Endothelial cell of umbilical vein (primary cell): ENCODE measurements at regions of chr13 and their contacts with region 1.

Region 1: GRCh38 chr13:30429721-30430694 is 7.7 kb downstream of the UBE2L5 start:
- DNase-seq: peak; percentile 81
- H3K4me3 ChIP-seq: no peak overlapping the region
- H3K27ac ChIP-seq: peak overlapping the region; percentile 42
- H3K4me1 ChIP-seq: peaks cover 13% of the 10 kb centered on the region
- H3K27me3 ChIP-seq: no peaks in the 10 kb centered on the region
- CTCF ChIP-seq: no peak
- POLR2A ChIP-seq: no peak

Region 2: GRCh38 chr13:30196025-30196424 is 234.0 kb before region 1 on chr13:
- CTCF ChIA-PET with region 1: no interaction called
- POLR2A ChIA-PET with region 1: no interaction called
- dilution Hi-C with region 1: no loop called
- intact Hi-C with region 1: no loop called
- DNase-seq: peak; percentile 4
- H3K4me3 ChIP-seq: no peak overlapping the region
- H3K27ac ChIP-seq: no peak overlapping the region
- H3K4me1 ChIP-seq: no peaks in the 10 kb centered on the region
- H3K27me3 ChIP-seq: no peaks in the 10 kb centered on the region
- CTCF ChIP-seq: no peak
- POLR2A ChIP-seq: no peak

Region 3: DNA sequence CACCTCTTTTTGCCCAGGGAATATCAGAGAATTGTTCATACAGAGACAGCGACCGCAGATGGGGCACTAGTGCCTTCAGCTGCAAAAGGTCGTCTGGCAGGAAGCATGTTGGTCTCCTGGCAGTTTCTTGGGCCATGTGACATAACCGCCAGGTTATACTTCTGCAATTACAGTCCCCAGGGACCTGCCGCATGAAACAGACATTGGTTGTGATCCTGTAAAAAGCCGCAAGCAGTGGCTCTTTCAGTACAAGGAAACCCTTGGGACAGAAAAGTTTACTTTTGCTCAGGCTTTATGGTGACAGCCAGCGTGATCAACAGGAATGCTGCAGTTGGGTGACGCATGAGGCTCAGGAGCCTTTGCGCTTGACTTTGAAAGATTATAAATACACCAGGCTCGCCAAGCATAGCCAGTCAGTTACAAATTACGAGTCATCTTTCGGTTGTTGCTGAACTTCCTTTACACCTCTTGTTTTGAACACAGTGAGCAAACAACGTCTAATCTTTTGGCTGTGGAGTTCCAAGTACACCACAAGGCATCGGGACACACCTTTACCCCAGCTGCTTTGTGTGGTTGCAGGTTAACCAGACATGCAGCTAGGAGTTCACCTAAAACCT is 58.3 kb before region 1 on chr13:
- CTCF ChIA-PET with region 1: no interaction called
- POLR2A ChIA-PET with region 1: no interaction called
- dilution Hi-C with region 1: no loop called
- intact Hi-C with region 1: no loop called
- DNase-seq: peak; percentile 36
- H3K4me3 ChIP-seq: no peak overlapping the region
- H3K27ac ChIP-seq: no peak overlapping the region
- H3K4me1 ChIP-seq: peaks cover 3% of the 10 kb centered on the region
- H3K27me3 ChIP-seq: peaks cover 0 to 2% of the 10 kb centered on the region in 2 experiments
- CTCF ChIP-seq: no peak
- POLR2A ChIP-seq: no peak

Region 4: GRCh38 chr13:30443957-30444404 is 14.0 kb after region 1 on chr13:
- CTCF ChIA-PET with region 1: interaction called, 5 read pairs
- POLR2A ChIA-PET with region 1: interaction called, 4 read pairs
- dilution Hi-C with region 1: no loop called
- intact Hi-C with region 1: loop called (anchors 2 kb)
- DNase-seq: no peak
- H3K4me3 ChIP-seq: no peak overlapping the region
- H3K27ac ChIP-seq: no peak overlapping the region
- H3K4me1 ChIP-seq: peaks cover 9% of the 10 kb centered on the region
- H3K27me3 ChIP-seq: no peaks in the 10 kb centered on the region
- CTCF ChIP-seq: no peak
- POLR2A ChIP-seq: no peak

Region 5: GRCh38 chr13:31335097-31335496 is 905.1 kb after region 1 on chr13:
- CTCF ChIA-PET with region 1: no interaction called
- POLR2A ChIA-PET with region 1: no interaction called
- dilution Hi-C with region 1: no loop called
- intact Hi-C with region 1: no loop called
- DNase-seq: no peak
- H3K4me3 ChIP-seq: no peak overlapping the region
- H3K27ac ChIP-seq: no peak overlapping the region
- H3K4me1 ChIP-seq: no peaks in the 10 kb centered on the region
- H3K27me3 ChIP-seq: no peaks in the 10 kb centered on the region
- CTCF ChIP-seq: no peak
- POLR2A ChIP-seq: no peak